ENCODE measurements at regions of chr19 and their contacts with region 1.

Region 1: DNA sequence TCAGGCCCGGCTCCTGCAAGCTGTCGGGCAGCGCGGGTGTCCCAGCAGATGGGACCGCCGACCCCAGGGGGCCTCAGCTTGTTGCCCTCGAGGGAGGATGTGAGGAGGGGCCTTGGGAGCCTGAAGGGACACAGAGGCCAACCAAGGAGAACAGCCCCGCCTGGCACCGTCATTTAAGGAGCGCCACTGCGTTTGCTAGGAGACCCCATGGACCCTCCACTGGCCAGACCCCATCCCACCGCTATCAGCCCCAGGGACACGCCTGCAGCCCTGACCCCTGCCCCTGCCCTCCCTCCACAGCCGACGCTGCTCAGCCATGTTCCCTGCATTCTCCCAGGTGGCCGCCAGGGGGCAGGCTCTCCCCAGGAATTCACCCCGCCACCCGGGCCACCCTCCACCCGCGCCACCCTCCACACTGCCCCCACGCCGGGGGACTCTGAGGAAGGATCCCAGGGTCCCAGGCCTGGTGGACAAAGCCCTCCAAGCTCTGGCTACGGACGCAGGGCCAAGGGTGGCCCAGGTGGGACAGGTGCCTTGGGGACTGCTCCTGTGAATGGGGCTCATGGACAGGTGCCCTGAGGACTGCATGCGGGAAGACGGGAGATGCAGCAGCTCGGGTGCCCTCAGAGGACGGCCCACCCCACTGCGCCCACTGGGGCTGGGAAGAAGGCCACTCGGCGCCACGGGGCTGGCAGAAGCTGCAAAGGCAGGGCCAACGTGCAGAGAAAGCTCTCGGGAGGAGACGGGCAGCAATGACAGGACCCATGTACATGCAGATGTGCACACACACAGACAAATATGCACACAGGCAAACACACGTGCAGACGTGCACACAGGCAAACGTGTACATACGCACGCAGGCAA is 34.4 kb downstream of the PIP5K1C start:
- DNase-seq: peak; percentile 93
- H3K4me3 ChIP-seq: peak overlapping the region in 4 of 8 donors; percentile 3 to 43 (median 8)
- H3K27ac ChIP-seq: peak overlapping the region in 4 of 8 donors; percentile 19 to 79 (median 60)
- H3K4me1 ChIP-seq: peaks cover 17 to 59% (median 37%) of the 10 kb centered on the region in 6 donors
- H3K27me3 ChIP-seq: peaks cover 0 to 7% (median 0%) of the 10 kb centered on the region in 7 donors
- CTCF ChIP-seq: peak; percentile 91 to 98 (median 98)
- POLR2A ChIP-seq: no peak

Region 2: DNA sequence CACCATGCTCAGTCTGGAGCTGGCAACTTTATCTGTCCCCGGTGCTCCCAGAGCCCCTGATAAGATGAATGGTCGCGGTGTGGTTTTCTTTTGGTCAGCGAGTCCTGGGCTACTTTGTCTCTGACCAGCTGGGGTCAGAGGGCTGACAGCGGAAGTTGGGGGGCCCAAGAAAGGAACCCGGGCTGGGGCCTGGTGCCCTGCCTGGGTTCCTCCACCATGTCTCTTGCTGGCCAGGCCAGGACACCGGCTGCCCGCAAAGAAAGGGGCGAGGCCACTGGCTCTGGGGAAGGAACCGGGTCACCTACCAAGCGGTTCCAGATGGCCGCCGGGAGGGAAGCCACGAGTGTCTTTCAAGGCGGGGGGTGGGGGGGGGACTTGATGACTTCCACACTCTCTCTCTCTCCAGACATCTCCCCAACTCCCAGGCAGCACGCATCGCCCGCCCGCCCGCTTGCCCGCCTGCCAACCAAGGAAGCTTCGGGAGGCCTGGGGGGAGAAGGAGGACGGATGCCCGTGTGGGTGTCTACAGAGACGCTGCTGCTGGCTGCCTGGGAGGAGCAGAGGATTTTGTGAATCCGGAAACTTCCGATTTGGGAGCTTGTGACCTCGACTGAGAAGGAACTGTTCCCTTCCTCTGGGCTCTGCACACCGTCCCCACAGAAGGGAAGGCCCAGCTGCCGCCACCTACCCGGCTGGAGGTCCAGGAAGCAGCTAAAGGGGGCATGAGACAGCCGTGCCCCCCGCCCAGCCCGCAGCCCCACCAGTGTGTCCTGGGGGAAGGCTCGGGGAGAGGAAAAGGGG is 33.3 kb after region 1 on chr19:
- intact Hi-C with region 1: loop called (anchors 2 kb)
- DNase-seq: peak; percentile 81
- H3K4me3 ChIP-seq: peak overlapping the region; percentile 60 to 94 (median 74)
- H3K27ac ChIP-seq: peak overlapping the region; percentile 35 to 89 (median 82)
- H3K4me1 ChIP-seq: peaks cover 9 to 56% (median 28%) of the 10 kb centered on the region in 6 donors
- H3K27me3 ChIP-seq: peaks cover 0 to 5% (median 0%) of the 10 kb centered on the region in 7 donors
- CTCF ChIP-seq: no peak
- POLR2A ChIP-seq: no peak

Measured in spleen (tissue), 13 donors.